WTC11 (cell line): ENCODE measurements at regions of chr2 and their contacts with region 1.

Region 1: GRCh38 chr2:207625018-207625907 is at the start of gene METTL21A:
- DNase-seq: peak; percentile 73
- ATAC-seq: peak; percentile 51
- H3K4me3 Mint-ChIP-seq: peak within 1 kb of the TSS; percentile 90
- H3K27ac Mint-ChIP-seq: peak within 1 kb of the TSS; percentile 97
- H3K4me1 Mint-ChIP-seq: peaks cover 24% of the 10 kb centered on the region
- H3K27me3 Mint-ChIP-seq: no peaks in the 10 kb centered on the region; the same call in 1 of the 2 replicates
- CTCF ChIP-seq: no peak
- total RNA-seq, gene METTL21A: 56.0 to 57.6 TPM (median 56.4 TPM) in 3 replicates

Region 2: DNA sequence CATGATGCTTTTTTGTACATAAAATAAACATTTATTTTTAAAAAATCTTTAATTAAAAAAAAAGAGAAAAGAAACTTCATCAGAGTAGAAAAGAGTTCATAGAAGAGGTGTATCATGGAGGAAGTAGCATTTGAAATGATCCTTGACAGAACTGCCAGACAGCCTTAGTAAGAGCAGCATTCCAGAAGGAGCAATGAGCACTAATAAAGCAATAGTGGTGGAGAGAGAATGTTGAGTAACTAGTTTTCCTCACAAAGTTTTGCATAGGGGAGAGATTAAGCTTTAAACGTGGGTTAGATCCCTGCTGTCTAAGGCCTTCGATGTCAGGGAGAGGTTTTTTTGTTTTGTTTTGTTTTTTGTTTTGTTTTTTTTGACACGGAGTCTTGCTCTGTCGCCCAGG is 29.7 kb after region 1 on chr2:
- CTCF ChIA-PET with region 1: interaction called, 10 read pairs
- POLR2A ChIA-PET with region 1: no interaction called
- DNase-seq: no peak
- ATAC-seq: no peak
- H3K4me3 Mint-ChIP-seq: no peak overlapping the region
- H3K27ac Mint-ChIP-seq: no peak overlapping the region
- H3K4me1 Mint-ChIP-seq: no peaks in the 10 kb centered on the region
- H3K27me3 Mint-ChIP-seq: no peaks in the 10 kb centered on the region
- CTCF ChIP-seq: no peak

Region 3: DNA sequence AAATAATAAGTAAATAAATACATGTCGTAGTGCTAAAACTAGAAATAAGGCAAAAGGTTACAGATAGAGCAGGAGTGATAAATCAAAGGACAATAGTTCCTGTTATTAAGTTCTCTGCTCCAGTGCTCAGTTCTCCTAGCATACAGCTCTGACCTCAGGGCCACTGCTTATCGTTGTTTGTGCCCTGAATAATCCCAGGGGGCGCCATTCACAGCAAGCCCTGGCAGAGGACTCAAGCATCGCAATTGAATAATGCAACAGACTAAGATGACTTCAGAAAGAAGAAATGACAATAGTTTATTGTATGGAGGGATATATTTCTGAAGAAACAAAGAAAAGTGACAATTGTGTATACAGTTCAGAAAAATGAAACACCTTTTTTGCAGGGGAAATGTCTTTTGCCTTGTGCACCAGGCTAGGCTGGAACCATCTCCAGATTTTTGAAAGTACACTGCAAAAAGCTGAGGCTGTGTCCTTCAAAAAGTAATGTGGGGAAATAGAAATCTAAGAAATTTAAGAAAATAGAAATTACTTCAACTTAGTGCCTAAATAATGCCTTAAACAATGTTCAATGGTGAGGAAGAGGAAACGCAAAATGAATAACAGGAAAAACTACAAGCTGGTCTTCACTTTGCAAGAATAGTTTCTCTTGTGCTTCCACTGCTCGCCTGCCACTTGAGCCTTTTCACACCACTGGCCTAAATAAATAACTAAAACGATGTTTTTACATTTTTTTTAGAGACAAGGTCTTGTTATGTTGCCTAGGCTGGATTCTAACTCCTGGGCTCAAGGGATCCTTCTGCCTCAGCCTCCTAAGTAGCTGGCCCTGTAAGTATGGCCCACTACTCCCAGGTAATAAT is 67.2 kb after region 1 on chr2:
- CTCF ChIA-PET with region 1: interaction called, 39 read pairs
- POLR2A ChIA-PET with region 1: no interaction called
- DNase-seq: peak; percentile 55
- ATAC-seq: peak; percentile 95
- H3K4me3 Mint-ChIP-seq: no peak overlapping the region
- H3K27ac Mint-ChIP-seq: no peak overlapping the region
- H3K4me1 Mint-ChIP-seq: 0 out of 2 replicates have a peak, but pooled peaks cover 3% of the 10 kb centered on the region
- H3K27me3 Mint-ChIP-seq: no peaks in the 10 kb centered on the region
- CTCF ChIP-seq: peak; percentile 39; the same call in 1 of the 2 replicates

Region 4: DNA sequence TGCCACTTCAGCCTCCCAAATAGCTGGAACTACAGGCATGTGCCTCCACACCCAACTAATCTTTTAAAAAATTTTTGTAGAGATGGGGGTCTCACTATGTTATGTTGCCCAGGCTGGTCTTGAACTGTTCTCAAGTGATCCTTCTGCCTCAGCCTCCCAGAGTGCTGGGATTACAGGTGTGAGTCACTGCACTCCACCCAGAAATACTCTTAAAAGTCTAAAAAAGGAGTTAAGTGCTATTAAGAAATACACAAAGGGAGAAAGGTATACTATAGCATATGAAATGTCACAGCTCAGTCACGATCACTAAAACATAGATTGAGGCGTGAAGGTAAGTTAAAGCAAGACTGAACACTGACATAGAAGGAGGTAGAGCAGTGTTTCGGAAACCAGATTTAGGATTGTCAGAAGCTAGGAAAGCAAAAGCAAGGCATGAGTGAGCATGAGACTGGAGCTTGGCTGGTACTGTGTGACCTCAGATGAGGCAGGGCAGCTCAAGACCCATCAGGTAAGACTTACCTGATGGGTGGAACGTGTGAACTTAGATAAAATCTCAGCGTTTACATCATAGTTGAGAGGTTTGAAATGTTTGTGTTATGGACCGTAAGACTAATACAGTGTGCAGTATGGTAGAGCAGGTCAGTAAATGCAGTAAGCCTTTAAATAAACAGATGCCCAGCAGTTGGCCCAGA is 95.4 kb after region 1 on chr2:
- CTCF ChIA-PET with region 1: interaction called, 17 read pairs
- POLR2A ChIA-PET with region 1: interaction called, 3 read pairs
- DNase-seq: no peak
- ATAC-seq: no peak
- H3K4me3 Mint-ChIP-seq: no peak overlapping the region
- H3K27ac Mint-ChIP-seq: peak overlapping the region; percentile 75; the same call in 1 of the 2 replicates
- H3K4me1 Mint-ChIP-seq: peaks cover 11% of the 10 kb centered on the region
- H3K27me3 Mint-ChIP-seq: no peaks in the 10 kb centered on the region
- CTCF ChIP-seq: no peak

Region 5: GRCh38 chr2:207746131-207746530 is 120.9 kb after region 1 on chr2:
- CTCF ChIA-PET with region 1: interaction called, 27 read pairs
- POLR2A ChIA-PET with region 1: no interaction called
- DNase-seq: peak; percentile 55
- ATAC-seq: peak; percentile 82
- H3K4me3 Mint-ChIP-seq: no peak overlapping the region
- H3K27ac Mint-ChIP-seq: peak overlapping the region; percentile 31; the same call in 1 of the 2 replicates
- H3K4me1 Mint-ChIP-seq: peaks cover 16% of the 10 kb centered on the region
- H3K27me3 Mint-ChIP-seq: no peaks in the 10 kb centered on the region
- CTCF ChIP-seq: peak; percentile 83